ENCODE measurements at regions of chr1 and their contacts with region 1.

Region 1: DNA sequence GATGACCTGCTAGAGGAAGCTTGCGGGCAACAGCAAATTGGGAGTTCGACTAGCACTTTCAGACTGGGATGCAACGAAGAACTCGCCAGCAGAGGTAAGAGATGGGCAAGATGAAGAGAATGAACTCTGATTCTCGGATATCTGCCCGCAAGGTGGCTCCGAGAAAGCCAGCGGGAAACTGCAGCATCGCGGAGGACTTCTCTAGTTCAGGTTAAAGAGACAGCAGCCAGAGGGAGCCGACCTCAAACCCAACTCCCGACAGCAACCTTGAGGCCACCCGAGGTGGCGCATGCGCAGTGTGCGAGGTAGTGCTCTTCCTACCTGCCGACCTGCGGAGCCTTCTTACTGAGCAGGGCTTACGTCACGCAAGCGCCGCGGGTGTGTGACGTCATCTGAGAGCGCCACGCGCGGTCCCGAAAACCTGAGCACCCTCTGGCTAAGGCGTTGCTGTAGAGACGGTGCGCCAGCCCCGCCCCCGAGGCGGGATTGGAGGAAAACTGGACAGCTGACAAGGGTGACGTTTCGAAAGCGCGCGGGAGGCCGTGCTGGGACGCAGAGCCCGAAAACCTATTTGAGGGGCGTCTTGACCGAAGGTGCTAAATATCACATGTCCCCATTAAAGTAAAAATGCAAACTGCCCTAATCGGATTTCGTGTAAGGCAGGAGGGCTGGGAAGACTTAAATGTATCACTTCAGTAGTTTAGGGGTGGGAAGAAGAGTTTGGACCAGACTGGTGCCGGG is 110.5 kb upstream of the SLC25A33 start:
- DNase-seq: peak; percentile 99
- H3K4me3 ChIP-seq: peak overlapping the region; percentile 53 to 58
- H3K4me3 Mint-ChIP-seq: peak overlapping the region; percentile 91 to 99 (median 96)
- H3K27ac ChIP-seq: peak overlapping the region; percentile 71
- H3K27ac Mint-ChIP-seq: peak overlapping the region; percentile 98 to 100 (median 99)
- H3K4me1 ChIP-seq: peaks cover 47% of the 10 kb centered on the region
- H3K4me1 Mint-ChIP-seq: peaks cover 38 to 58% (median 49%) of the 10 kb centered on the region in 4 donors
- H3K27me3 ChIP-seq: no peaks in the 10 kb centered on the region
- H3K27me3 Mint-ChIP-seq: peaks cover 0 to 5% of the 10 kb centered on the region in 2 donors

Region 2: DNA sequence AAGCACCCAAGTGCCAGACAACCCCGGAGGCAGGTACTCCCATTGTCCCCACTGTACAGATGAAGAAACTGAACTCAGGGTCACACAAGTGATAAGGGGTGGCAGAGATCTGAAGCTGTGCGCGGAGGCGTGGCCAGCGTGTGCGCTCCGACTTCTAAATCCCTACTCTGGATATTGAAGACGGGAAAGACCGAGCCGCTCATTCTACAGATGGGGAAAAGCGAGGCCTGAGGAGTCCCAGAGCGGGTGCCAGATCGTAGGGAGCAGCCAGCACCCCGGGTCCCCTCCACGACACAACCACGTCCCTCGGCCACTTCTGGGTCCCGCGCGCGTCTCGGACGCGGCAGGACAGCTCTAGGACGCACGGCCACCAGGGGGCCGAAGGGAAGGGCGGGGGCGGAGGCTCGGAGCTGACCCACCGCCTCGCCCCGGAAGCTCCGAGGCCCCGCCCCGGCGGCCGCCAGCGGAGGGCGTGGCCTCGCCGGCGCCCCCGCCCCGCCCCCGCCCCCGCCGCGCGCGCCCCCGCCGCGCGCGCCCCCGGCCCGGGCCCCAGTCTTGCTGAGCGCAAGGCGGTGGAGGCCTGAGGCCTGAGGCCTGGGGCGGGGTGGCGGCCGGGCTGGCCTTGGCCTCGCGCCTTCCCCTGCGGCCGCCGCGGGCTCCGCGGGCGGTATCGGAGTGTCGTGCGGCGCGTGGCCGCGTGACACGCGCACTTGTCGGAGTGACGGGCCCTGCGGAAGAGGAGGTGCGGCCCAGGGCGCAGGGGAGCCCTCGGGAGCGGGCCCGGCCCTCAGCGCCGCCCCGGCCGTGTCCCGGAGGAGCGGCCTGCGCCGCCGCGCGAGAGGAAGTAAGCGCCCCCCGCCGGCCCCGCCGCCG is 194.3 kb before region 1 on chr1 and contains the start of gene H6PD:
- CTCF ChIA-PET with region 1: no interaction called
- POLR2A ChIA-PET with region 1: interaction called, 3 read pairs
- intact Hi-C with region 1: loop called (anchors 5 kb)
- DNase-seq: peak; percentile 71 to 85 (median 77)
- H3K4me3 ChIP-seq: peak within 1 kb of the TSS; percentile 70 to 76
- H3K4me3 Mint-ChIP-seq: peak within 1 kb of the TSS; percentile 95 to 98 (median 96)
- H3K27ac ChIP-seq: peak within 1 kb of the TSS; percentile 79
- H3K27ac Mint-ChIP-seq: peak within 1 kb of the TSS; percentile 93 to 99 (median 99)
- H3K4me1 ChIP-seq: peaks cover 32% of the 10 kb centered on the region
- H3K4me1 Mint-ChIP-seq: peaks cover 23 to 49% (median 35%) of the 10 kb centered on the region in 4 donors
- H3K27me3 ChIP-seq: no peaks in the 10 kb centered on the region
- H3K27me3 Mint-ChIP-seq: no peaks in the 10 kb centered on the region
- total RNA-seq, gene H6PD: 17.3 to 18.8 TPM

Region 3: DNA sequence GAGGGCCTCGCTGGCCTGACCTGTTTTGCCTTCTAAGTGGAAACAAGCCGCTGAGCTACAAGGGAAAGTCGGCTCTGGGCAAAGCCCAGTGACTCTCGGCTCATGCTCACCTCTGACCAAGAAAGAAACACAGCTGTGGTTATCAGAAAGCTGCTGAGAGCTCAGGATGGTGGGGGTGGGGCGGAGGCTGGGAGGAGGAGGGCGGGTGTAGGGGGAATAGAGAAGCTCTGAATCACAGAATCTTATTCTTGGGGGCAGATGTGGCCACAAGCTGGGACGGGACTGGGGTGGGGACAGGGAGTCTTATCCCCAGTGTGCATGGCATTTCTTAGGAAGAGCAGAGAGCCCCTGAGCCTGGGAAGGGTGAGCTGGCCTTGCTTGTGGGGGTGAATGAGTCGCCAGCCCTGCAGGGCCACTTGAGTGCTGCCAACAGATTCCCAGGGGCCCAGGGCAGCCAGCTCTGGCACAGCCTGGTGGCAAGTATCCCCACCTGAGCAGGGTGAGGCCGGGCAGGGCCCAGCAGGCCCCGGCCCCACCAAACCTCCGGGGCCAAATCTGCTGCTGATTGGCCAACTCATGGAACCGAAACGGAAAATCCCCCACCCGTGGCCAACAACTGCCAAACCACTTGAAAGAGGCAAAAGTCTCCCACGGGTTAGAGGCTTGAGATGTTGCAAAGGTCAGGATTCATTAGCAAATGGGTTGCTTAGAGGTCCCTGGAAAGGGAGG is 15.5 kb before region 1 on chr1:
- CTCF ChIA-PET with region 1: interaction called, 4 read pairs
- POLR2A ChIA-PET with region 1: interaction called, 30 read pairs
- intact Hi-C with region 1: loop called (anchors 2 kb)
- DNase-seq: peak in 3 of 5 donors; percentile 19 to 45 (median 27)
- H3K4me3 ChIP-seq: peak overlapping the region in 1 of 2 donors; percentile 42
- H3K4me3 Mint-ChIP-seq: peak overlapping the region in 7 of 8 donors; percentile 40 to 75 (median 64)
- H3K27ac ChIP-seq: no peak overlapping the region
- H3K27ac Mint-ChIP-seq: peak overlapping the region in 2 of 7 donors; percentile 77 to 90
- H3K4me1 ChIP-seq: peaks cover 49% of the 10 kb centered on the region
- H3K4me1 Mint-ChIP-seq: peaks cover 34 to 60% (median 42%) of the 10 kb centered on the region in 4 donors
- H3K27me3 ChIP-seq: no peaks in the 10 kb centered on the region
- H3K27me3 Mint-ChIP-seq: peaks cover 0 to 2% of the 10 kb centered on the region in 2 donors

Region 4: GRCh38 chr1:9441451-9442133 is 12.8 kb after region 1 on chr1:
- CTCF ChIA-PET with region 1: no interaction called
- POLR2A ChIA-PET with region 1: no interaction called
- intact Hi-C with region 1: no loop called
- DNase-seq: no peak
- H3K4me3 ChIP-seq: no peak overlapping the region
- H3K4me3 Mint-ChIP-seq: no peak overlapping the region
- H3K27ac ChIP-seq: no peak overlapping the region
- H3K27ac Mint-ChIP-seq: no peak overlapping the region
- H3K4me1 ChIP-seq: no peaks in the 10 kb centered on the region
- H3K4me1 Mint-ChIP-seq: no peaks in the 10 kb centered on the region
- H3K27me3 ChIP-seq: no peaks in the 10 kb centered on the region
- H3K27me3 Mint-ChIP-seq: peaks cover 3 to 19% of the 10 kb centered on the region in 2 donors

Region 5: GRCh38 chr1:9700340-9700739 is 271.6 kb after region 1 on chr1:
- CTCF ChIA-PET with region 1: no interaction called
- POLR2A ChIA-PET with region 1: no interaction called
- intact Hi-C with region 1: no loop called
- DNase-seq: no peak
- H3K4me3 ChIP-seq: no peak overlapping the region
- H3K4me3 Mint-ChIP-seq: no peak overlapping the region
- H3K27ac ChIP-seq: no peak overlapping the region
- H3K27ac Mint-ChIP-seq: peak overlapping the region in 5 of 7 donors; percentile 46 to 80 (median 71)
- H3K4me1 ChIP-seq: peaks cover 59% of the 10 kb centered on the region
- H3K4me1 Mint-ChIP-seq: peaks cover 41 to 74% (median 57%) of the 10 kb centered on the region in 4 donors
- H3K27me3 ChIP-seq: no peaks in the 10 kb centered on the region
- H3K27me3 Mint-ChIP-seq: no peaks in the 10 kb centered on the region